Caco-2 (cell line): ENCODE measurements at regions of chr2 and their contacts with region 1.

Region 1: DNA sequence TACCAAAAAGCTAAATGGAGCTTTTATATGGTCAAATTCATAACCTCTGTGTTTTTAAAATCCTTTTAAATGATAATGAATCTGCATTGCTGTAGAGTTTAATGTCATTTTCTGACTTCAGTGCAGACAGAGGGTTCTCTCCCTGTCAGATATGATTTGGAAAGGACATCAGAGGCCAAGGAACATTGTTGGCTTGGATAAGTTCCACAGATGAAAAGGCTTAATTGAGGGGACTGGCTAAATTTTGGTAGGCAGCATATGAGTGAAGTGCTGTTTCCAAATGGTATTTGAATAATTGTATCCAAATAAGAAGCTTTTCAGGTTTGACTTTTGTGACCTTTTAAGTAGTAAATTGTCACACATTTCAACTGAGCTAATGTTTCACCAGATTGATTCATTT is 124.6 kb upstream of the KCNH7 start:
- DNase-seq: no peak
- H3K4me3 ChIP-seq: no peak overlapping the region
- H3K4me3 Mint-ChIP-seq: no peak overlapping the region
- H3K27ac Mint-ChIP-seq: no peak overlapping the region
- H3K4me1 ChIP-seq: no peaks in the 10 kb centered on the region
- H3K4me1 Mint-ChIP-seq: no peaks in the 10 kb centered on the region
- H3K27me3 ChIP-seq: no peaks in the 10 kb centered on the region
- H3K27me3 Mint-ChIP-seq: peaks cover 3% of the 10 kb centered on the region
- CTCF ChIP-seq: no peak

Region 2: GRCh38 chr2:162890690-162891311 is 72.4 kb before region 1 on chr2:
- CTCF ChIA-PET with region 1: no interaction called
- POLR2A ChIA-PET with region 1: no interaction called
- intact Hi-C with region 1: loop called (anchors 5 kb)
- DNase-seq: peak; percentile 41 to 43
- H3K4me3 ChIP-seq: no peak overlapping the region
- H3K4me3 Mint-ChIP-seq: no peak overlapping the region
- H3K27ac Mint-ChIP-seq: no peak overlapping the region
- H3K4me1 ChIP-seq: no peaks in the 10 kb centered on the region
- H3K4me1 Mint-ChIP-seq: no peaks in the 10 kb centered on the region
- H3K27me3 ChIP-seq: no peaks in the 10 kb centered on the region
- H3K27me3 Mint-ChIP-seq: no peaks in the 10 kb centered on the region
- CTCF ChIP-seq: peak; percentile 82 to 83